ENCODE measurements at regions of chr3 and their contacts with region 1.

Region 1: DNA sequence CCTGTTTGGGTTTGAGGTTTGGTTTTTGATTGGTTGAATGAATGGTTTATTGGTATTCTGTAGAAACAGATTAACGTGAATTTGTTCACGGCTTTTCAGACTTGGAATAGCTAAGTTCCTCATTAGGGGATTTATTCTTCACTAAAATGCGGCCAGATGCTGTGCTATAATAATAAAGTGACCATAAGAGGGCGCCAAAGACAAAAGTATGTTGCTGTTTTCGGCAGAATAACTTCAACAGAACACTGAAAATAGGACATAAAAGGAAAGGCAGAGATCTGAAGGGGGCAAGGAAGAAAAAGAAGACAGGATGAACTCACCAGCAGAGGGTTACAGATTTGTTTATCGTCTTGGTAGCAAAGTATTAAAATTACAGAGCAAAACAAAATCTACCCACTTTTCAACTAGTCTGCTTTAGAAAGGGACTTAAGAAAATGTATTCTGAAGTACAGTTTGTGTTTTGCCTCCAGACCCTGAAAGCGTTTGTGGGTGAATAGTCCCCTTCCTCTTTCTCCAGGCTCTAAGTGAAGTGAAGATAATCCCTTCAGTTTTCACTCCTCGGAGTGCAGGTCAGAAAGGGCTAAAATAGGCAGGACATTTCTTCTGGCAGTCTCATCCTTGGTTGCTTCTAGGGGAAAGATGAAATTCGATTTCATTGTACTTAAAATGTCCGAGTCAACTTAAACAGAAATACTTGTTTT is 147.6 kb downstream of the IL20RB start:
- DNase-seq: no peak
- ATAC-seq: peak; percentile 33 to 53
- H3K4me3 ChIP-seq: no peak overlapping the region
- H3K27ac ChIP-seq: no peak overlapping the region
- H3K4me1 ChIP-seq: peaks cover 0 to 4% of the 10 kb centered on the region in 2 donors
- H3K27me3 ChIP-seq: no peaks in the 10 kb centered on the region
- CTCF ChIP-seq: peak; percentile 2 to 65 (median 42)
- POLR2A ChIP-seq: no peak

Region 2: GRCh38 chr3:137946345-137946973 is 841.0 kb after region 1 on chr3:
- in situ Hi-C with region 1: loop called in 3 of 4 experiments (anchors 25 kb)
- intact Hi-C with region 1: loop called (anchors 2 kb)
- DNase-seq: peak in 1 of 2 donors; percentile 13
- ATAC-seq: no peak
- H3K4me3 ChIP-seq: no peak overlapping the region
- H3K27ac ChIP-seq: no peak overlapping the region
- H3K4me1 ChIP-seq: no peaks in the 10 kb centered on the region
- H3K27me3 ChIP-seq: no peaks in the 10 kb centered on the region
- CTCF ChIP-seq: peak in 4 of 5 experiments; percentile 9 to 51 (median 32)
- POLR2A ChIP-seq: no peak

Region 3: DNA sequence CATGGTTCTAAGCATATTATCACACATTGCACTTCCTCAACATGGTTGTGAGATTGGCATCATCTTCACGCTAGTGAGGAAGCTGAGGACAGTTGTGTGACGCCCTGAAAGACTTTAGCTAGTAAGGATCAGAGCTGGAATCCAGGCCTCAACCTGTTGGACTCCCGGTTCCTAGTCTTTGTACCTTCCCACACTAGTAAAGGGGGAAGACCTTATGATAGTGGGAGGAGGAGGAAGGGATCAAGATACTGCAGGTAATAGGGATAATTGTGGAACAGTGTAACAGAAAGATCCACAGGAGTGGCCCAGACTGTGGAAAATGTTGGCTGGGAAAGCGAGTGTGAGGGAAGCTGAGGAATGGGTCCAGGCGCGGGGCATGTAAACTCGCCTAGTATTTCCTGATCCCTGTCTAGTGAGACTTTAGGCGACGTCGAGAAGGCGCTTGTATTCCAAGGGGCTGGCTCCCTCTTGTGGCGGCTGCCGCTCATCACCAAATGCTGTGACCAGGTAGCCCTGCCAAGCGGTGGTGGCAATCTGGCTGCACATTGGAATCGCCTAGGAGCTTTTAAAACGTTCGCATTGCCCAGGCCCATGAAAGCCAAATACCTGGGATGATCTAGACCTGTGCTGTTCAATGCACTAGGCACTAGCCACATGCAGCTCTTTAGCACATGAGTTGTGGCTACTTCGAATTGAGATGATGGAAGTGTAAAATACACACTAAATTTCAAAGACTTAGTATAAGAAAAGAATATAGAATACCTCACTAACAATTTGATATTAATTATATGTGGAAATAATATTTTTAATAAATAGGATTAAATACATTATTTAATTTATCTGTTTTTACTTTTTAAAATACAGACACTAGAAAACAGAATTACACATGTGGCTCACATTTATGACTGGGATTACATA is 865.7 kb after region 1 on chr3:
- in situ Hi-C with region 1: loop called in 2 of 4 experiments (anchors 25 kb)
- intact Hi-C with region 1: no loop called
- DNase-seq: peak; percentile 5 to 33
- ATAC-seq: peak in 1 of 2 donors; percentile 58
- H3K4me3 ChIP-seq: no peak overlapping the region
- H3K27ac ChIP-seq: no peak overlapping the region
- H3K4me1 ChIP-seq: no peaks in the 10 kb centered on the region
- H3K27me3 ChIP-seq: no peaks in the 10 kb centered on the region
- CTCF ChIP-seq: peak; percentile 19 to 66 (median 42)
- POLR2A ChIP-seq: no peak

Region 4: DNA sequence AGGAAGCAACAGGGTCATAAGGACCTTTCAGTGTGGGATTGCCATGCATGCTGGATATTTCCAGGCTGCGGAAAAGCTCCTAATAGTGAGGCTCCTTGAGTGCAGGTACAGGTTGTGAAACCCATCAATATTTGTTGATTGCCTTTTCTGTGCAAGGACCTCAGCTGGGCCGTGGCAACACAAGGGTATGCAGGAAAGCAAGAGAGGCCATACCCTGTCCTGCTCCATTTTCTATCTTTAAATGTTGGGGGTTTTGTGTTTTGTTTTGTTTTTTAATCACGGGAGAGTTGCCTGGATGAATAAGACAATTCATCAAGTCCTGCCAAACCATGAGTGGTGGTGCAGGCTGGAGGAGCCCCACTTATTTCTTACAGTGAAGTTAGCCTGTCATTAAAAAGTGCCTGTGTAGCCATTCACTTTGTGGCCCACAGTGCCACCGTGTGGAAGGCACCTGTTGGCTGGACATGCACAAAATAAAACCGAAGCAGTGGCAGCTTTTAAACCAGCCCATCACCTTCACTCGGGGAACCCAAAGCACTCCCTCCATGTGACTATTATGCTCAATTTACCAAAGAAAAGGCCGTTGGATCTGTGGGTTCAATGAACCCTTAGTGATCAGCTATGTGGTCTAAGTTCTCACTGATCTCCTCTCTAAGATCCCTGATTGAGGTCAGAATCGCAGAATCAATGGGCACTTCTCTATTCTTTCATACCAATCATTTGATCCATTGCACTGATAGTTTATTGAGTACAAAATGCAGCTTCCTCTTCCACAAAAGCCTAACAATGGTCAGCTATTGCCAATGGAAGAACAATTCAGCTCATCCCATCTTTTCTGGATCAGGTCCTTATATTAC is 946.7 kb after region 1 on chr3:
- in situ Hi-C with region 1: no loop called
- intact Hi-C with region 1: loop called (anchors 10 kb)
- DNase-seq: no peak
- ATAC-seq: no peak
- H3K4me3 ChIP-seq: no peak overlapping the region
- H3K27ac ChIP-seq: no peak overlapping the region
- H3K4me1 ChIP-seq: no peaks in the 10 kb centered on the region
- H3K27me3 ChIP-seq: no peaks in the 10 kb centered on the region
- CTCF ChIP-seq: peak in 3 of 5 experiments; percentile 20 to 45 (median 22)
- POLR2A ChIP-seq: no peak

Measured in gastrocnemius medialis (tissue), 4 donors.